ENCODE measurements at regions of chr1 and their contacts with region 1.

Region 1: DNA sequence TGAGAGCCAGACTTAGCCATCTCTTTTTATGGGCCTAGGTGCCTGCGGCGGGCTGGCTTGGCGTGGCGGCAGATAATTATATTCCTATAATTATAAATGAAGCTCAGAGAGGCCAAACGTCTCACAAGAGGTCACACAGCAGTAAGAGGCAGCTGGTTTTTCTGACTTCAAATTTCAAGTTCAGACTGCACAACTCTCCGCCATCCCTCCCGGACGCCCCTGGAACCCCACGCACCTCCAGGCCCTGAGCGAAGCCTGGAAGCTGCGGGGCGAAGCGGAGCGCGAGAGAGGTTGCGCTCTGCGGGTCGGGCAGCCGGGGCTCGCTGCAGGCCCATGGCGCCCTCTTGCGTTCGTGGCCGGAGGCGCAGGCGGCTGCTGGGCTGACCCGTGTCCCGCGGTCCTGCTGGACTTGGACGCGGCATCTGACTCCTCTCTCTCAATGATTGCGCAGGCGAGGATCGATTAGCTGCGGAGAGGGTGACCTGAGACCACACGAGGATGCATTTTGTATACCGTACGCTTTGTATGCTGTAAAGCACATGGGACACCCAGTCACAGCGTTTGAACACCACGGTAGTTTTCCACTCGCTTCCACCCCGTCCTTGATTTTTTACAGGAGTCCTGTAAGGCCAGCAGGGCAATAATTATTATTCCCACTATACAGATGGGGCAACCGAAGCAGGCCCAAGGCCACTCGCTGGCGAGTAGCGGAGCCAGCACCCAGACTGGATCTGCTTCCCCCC is 272.7 kb downstream of the FOXD2 start:
- DNase-seq: peak; percentile 85
- H3K4me3 ChIP-seq: peak overlapping the region in 3 of 4 donors; percentile 28 to 56 (median 40)
- H3K27ac ChIP-seq: peak overlapping the region; percentile 72 to 86 (median 78)
- H3K4me1 ChIP-seq: peaks cover 10 to 26% (median 22%) of the 10 kb centered on the region in 4 donors
- H3K27me3 ChIP-seq: peaks cover 70% of the 10 kb centered on the region
- CTCF ChIP-seq: peak; percentile 92 to 99 (median 97)
- EP300 ChIP-seq: no peak
- POLR2A ChIP-seq: no peak

Region 2: GRCh38 chr1:47192458-47193384 is 517.8 kb before region 1 on chr1:
- in situ Hi-C with region 1: loop called (anchors 25 kb)
- intact Hi-C with region 1: loop called (anchors 5 kb)
- DNase-seq: peak; percentile 82
- H3K4me3 ChIP-seq: no peak overlapping the region
- H3K27ac ChIP-seq: peak overlapping the region; percentile 60 to 86 (median 66)
- H3K4me1 ChIP-seq: peaks cover 7 to 46% (median 42%) of the 10 kb centered on the region in 4 donors
- H3K27me3 ChIP-seq: peaks cover 6% of the 10 kb centered on the region
- CTCF ChIP-seq: peak; percentile 92 to 96 (median 94)
- EP300 ChIP-seq: no peak
- POLR2A ChIP-seq: peak; percentile 37

Region 3: DNA sequence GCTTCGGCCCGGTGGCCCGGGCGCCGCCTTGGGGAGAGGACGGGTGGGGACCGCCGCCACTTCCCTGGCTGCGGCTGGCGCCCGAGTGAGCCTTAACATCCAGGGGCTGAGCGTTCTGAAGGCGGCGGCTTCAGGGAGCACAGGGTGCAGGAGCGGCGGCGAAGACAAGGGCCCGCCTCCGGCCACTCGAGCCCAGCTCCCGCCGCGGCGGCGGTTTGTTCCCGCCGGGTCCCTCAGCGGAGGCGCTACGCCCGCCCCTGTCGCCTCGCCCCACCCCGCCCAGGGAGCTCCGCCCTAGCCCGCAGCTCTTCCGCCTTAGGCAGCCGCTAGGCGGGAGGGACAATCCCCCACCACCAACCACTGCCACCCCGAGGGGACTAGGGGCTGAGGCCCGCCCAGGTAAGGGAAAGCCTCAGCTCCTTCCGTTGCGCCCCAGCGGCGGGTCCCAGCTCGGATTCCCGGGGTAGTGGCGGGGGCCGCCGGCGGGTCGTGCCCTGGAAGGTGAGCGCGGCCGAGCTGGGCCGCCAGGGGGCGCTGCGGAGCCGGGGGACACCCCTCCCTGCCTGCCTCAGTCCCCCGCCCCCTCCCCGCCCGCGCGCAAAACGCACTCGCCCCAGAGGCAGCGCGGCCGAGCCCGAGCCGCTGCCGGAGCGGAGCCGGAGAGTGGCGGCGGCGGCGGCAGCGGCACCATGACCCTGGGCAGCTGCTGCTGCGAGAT is 272.9 kb before region 1 on chr1 and contains the start of gene FOXD2:
- in situ Hi-C with region 1: loop called (anchors 5 to 25 kb)
- intact Hi-C with region 1: loop called (anchors 2 kb)
- DNase-seq: peak; percentile 94
- H3K4me3 ChIP-seq: peak within 1 kb of the TSS; percentile 61 to 85 (median 72)
- H3K27ac ChIP-seq: peak within 1 kb of the TSS; percentile 85 to 95 (median 91)
- H3K4me1 ChIP-seq: peaks cover 4 to 45% (median 28%) of the 10 kb centered on the region in 4 donors
- H3K27me3 ChIP-seq: peaks cover 92% of the 10 kb centered on the region
- CTCF ChIP-seq: peak; percentile 97 to 100 (median 98)
- EP300 ChIP-seq: no peak
- POLR2A ChIP-seq: peak; percentile 83
- total RNA-seq, gene FOXD2: 15.8 to 20.9 (median 17.2) TPM

Region 4: GRCh38 chr1:47527658-47528255 is 182.7 kb before region 1 on chr1:
- in situ Hi-C with region 1: loop called in 3 of 4 experiments (anchors 10 to 25 kb)
- intact Hi-C with region 1: loop called (anchors 5 kb)
- DNase-seq: peak; percentile 73
- H3K4me3 ChIP-seq: no peak overlapping the region
- H3K27ac ChIP-seq: no peak overlapping the region
- H3K4me1 ChIP-seq: peaks cover 0 to 1% (median under 1%) of the 10 kb centered on the region in 4 donors
- H3K27me3 ChIP-seq: no peaks in the 10 kb centered on the region
- CTCF ChIP-seq: peak; percentile 42 to 72 (median 58)
- EP300 ChIP-seq: no peak
- POLR2A ChIP-seq: no peak

Region 5: DNA sequence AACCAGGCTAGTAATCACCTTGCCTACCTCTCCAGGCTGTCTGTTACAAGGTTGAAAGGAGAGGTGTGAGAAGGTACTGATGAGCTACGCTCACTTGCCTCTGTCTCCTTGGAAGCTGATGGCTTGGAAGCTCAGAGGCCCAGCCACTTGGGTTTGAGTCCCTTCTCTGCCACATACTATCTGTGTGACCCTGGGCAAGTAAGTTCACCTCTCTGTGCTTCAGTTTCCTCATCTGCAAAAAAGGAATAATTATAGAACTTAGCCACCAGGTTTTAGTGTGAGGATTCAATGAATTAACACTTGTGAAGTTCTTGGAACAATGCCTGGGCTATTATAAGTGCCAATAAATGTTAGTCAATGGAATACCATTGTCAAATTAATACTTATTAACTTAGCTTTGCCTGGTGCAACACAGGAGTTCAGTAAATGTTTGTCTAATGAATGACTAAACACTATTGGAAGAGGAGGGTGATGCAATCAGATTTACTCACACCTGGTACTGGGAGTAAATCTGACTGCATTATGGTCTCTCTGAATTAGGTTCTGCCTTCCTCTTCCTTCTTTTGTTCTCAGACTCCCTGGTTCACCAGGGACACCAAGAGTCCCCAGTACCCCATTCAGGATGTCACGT is 231.2 kb after region 1 on chr1:
- in situ Hi-C with region 1: no loop called
- intact Hi-C with region 1: no loop called
- DNase-seq: no peak
- H3K4me3 ChIP-seq: no peak overlapping the region
- H3K27ac ChIP-seq: no peak overlapping the region
- H3K4me1 ChIP-seq: peaks cover 0 to 4% (median 0%) of the 10 kb centered on the region in 4 donors
- H3K27me3 ChIP-seq: no peaks in the 10 kb centered on the region
- CTCF ChIP-seq: no peak
- EP300 ChIP-seq: no peak
- POLR2A ChIP-seq: no peak

Measured in transverse colon (tissue), 4 donors.